ENCODE measurements at regions of chr12 and their contacts with region 1.

Region 1: DNA sequence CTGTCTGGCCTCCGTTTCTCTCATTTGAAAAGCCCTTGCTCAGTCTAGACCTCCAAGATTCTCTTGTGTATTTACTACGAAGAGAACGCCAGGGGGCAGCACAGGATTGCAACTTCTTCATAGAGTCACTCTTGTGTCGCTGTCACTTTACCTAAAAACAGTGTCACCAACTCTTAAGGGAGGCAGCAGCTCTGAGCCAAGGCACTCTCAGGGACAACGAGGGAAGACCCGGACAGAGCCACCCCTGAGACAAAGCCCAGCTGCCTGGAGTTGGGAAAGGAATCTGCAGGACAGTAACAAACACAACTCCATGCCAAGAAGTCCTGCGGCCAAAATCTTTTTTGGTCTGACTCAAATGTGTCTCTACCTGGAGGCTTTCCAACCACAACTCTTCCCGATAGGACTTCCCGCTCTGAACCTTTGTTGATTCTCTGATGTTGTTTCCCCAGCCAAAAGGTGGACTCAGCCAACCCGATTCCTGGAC is 9.6 kb upstream of the RPAP3 start:
- DNase-seq: peak; percentile 56
- H3K4me3 Mint-ChIP-seq: no peak overlapping the region
- H3K27ac Mint-ChIP-seq: no peak overlapping the region
- H3K4me1 Mint-ChIP-seq: peaks cover 23% of the 10 kb centered on the region
- H3K27me3 Mint-ChIP-seq: no peaks in the 10 kb centered on the region

Region 2: GRCh38 chr12:47758834-47759690 is 43.6 kb after region 1 on chr12 and contains the start of gene RAPGEF3:
- intact Hi-C with region 1: loop called (anchors 2 kb)
- DNase-seq: peak; percentile 62
- H3K4me3 Mint-ChIP-seq: peak within 1 kb of the TSS; percentile 75
- H3K27ac Mint-ChIP-seq: no peak within 1 kb of the TSS
- H3K4me1 Mint-ChIP-seq: peaks cover 34% of the 10 kb centered on the region
- H3K27me3 Mint-ChIP-seq: peaks cover 7% of the 10 kb centered on the region
- total RNA-seq, gene RAPGEF3: 1.8 and 2.7 TPM in 2 replicates

Region 3: DNA sequence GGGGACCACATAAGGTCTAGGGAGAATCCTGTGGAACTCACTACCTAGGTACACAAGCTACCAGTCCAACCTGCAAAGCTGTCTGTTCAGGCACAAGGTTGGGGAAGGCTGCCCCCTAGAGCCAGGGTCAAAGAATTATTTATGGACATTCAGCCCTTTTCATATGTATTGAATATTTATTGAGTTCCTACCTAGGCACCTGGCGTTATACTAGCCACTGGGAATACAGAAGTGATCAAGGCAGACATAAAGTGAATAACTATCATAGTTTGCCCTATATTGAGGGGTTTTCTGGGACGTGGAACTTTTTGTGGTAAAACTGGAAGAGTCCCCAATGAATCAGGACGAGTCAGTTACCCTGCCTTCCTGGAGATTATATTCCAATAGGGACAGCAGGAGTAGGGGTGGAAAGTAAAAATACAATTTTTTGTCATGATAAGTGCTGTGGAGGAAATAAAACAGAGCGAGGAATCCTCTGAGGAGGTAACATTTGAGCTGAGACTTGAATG is 51.8 kb after region 1 on chr12:
- intact Hi-C with region 1: loop called (anchors 1 kb)
- DNase-seq: peak; percentile 53
- H3K4me3 Mint-ChIP-seq: no peak overlapping the region
- H3K27ac Mint-ChIP-seq: no peak overlapping the region
- H3K4me1 Mint-ChIP-seq: peaks cover 5% of the 10 kb centered on the region
- H3K27me3 Mint-ChIP-seq: peaks cover 19% of the 10 kb centered on the region

Region 4: DNA sequence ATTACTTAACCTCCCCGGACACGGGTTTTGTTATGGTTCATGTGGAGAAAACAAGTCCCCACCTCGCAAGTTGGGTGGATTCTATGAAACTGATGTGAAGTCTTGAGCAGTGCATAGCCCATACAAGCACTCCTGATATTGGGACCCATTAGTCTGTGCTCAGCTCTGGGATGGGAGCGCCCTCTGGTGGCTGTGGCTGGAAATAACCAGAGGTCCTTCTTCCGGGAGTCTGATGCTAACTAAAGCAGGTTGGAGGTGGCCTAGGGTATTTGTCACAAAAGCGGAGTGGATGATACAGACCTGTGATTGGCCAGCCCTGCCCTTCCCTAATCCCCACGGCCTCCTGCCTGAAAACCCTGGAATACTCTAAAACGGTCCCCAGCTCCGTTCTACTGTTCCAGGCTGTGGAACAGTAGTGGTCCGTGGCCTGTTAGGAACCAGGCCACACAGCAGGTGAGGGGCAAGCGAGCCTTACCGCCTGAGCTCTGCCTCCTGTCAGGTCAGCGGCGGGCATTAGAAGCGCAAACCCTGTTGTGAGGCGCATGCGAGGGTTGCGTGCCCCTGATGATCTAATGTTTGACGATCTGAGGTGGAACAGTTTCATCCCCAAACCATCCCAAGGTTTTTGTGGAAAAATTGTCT is 64.0 kb after region 1 on chr12:
- intact Hi-C with region 1: loop called (anchors 1 kb)
- DNase-seq: peak; percentile 85
- H3K4me3 Mint-ChIP-seq: no peak overlapping the region
- H3K27ac Mint-ChIP-seq: no peak overlapping the region
- H3K4me1 Mint-ChIP-seq: peaks cover 27% of the 10 kb centered on the region
- H3K27me3 Mint-ChIP-seq: no peaks in the 10 kb centered on the region

Region 5: DNA sequence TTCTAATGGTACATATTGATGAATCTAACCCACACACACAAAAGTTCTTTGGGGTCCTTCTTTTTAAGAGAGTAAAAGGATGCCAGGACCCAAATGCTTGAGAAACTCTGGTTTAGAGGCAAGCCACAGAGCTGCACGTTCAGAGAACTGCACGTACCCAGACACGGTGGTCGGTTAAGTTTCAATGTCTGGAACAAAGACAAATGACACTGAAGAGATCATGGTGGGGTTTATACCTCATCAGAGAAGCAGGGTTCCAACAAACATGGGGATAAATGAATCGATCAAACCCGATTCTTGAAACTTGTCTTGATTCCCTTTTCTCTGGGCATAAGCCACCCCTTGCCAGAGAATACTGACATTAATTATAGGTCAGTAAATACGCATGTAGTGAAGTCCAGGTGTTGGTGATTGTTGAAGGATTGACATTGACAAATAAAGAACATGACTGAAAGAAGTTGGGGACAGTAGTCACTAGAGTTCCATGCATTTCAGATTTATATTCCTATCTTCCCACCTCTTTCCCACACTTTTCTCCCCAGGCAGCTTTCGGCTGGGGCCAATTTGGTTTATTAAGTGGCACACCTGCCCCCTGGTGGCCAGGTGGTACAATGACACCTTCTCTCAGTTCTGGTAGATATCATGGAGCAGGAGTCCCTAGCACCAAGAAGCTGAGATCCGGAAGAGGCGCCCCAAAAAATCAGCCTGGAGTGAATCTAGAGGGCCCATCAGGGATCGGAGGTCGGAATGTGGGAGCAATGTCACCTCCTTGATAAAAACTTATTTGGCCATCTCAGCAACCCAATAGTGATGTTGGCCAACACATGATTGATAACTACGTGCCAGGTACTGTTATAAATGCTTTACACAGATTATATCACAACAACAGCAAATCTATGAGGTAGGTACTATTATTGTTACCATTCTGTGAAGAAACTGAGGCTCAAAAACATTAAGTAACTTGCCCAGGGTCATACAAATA is 122.0 kb after region 1 on chr12:
- intact Hi-C with region 1: loop called (anchors 1 kb)
- DNase-seq: no peak
- H3K4me3 Mint-ChIP-seq: no peak overlapping the region
- H3K27ac Mint-ChIP-seq: no peak overlapping the region
- H3K4me1 Mint-ChIP-seq: peaks cover 49% of the 10 kb centered on the region
- H3K27me3 Mint-ChIP-seq: no peaks in the 10 kb centered on the region

Measured in activated T-helper 2 cell treated with anti-CD3 and anti-CD28 coated beads, Interferon-gamma antibody, Interleukin-2, Interleukin-4, amounts not matched to agents 10 μg/mL and 5 μg/mL and 100 μg/mL, durations not matched to agents 14 hours and 24 hours and 36 hours (primary cell).